Activated T-helper 1 cell treated with anti-CD3 and anti-CD28 coated beads, Interleukin-12 subunit alpha, Interleukin-12 subunit beta, Interleukin-2, Interleukin-4 antibody, amounts not matched to agents 30 ng/mL and 10 ng/mL and 1 ng/mL, durations not matched to agents 14 hours and 24 hours and 36 hours (primary cell): ENCODE measurements at regions of chr4 and their contacts with region 1.

Region 1: GRCh38 chr4:173288296-173288695 is 45.9 kb downstream of the HMGB2 start:
- DNase-seq: peak; percentile 62
- H3K4me3 Mint-ChIP-seq: no peak overlapping the region
- H3K27ac Mint-ChIP-seq: peak overlapping the region; percentile 67
- H3K4me1 Mint-ChIP-seq: peaks cover 17% of the 10 kb centered on the region
- H3K27me3 Mint-ChIP-seq: no peaks in the 10 kb centered on the region

Region 2: DNA sequence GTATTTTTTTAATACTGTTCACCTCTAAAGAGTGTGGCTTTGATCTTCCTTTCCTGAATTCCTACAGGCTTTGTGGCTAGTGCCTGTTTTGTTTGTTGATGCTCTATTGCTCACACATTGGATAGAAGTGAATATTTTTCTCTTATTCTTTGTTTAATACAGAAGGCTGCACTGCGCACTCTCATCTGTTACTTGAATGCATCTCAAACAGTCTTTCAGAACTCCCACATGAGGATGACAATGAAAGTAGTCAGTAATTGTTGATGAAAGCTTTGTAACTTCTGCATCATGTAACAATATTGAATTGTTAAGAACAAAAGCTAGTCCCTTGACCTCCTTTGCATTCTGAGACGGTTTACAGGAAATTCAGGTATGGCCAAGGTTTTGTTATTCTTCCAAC is 148.7 kb before region 1 on chr4:
- intact Hi-C with region 1: no loop called
- DNase-seq: no peak
- H3K4me3 Mint-ChIP-seq: no peak overlapping the region
- H3K27ac Mint-ChIP-seq: no peak overlapping the region
- H3K4me1 Mint-ChIP-seq: no peaks in the 10 kb centered on the region
- H3K27me3 Mint-ChIP-seq: peaks cover 8% of the 10 kb centered on the region

Region 3: GRCh38 chr4:173318648-173319211 is 30.4 kb after region 1 on chr4:
- intact Hi-C with region 1: loop called (anchors 1 kb)
- DNase-seq: no peak
- H3K4me3 Mint-ChIP-seq: no peak overlapping the region
- H3K27ac Mint-ChIP-seq: no peak overlapping the region
- H3K4me1 Mint-ChIP-seq: peaks cover 6% of the 10 kb centered on the region
- H3K27me3 Mint-ChIP-seq: no peaks in the 10 kb centered on the region

Region 4: GRCh38 chr4:173494013-173494970 is 206.0 kb after region 1 on chr4:
- intact Hi-C with region 1: loop called (anchors 1 kb)
- DNase-seq: peak; percentile 56
- H3K4me3 Mint-ChIP-seq: peak overlapping the region; percentile 87
- H3K27ac Mint-ChIP-seq: no peak overlapping the region
- H3K4me1 Mint-ChIP-seq: peaks cover 33% of the 10 kb centered on the region
- H3K27me3 Mint-ChIP-seq: peaks cover 35% of the 10 kb centered on the region

Region 5: GRCh38 chr4:174012135-174012885 is 724.0 kb after region 1 on chr4:
- intact Hi-C with region 1: no loop called
- DNase-seq: no peak
- H3K4me3 Mint-ChIP-seq: no peak overlapping the region
- H3K27ac Mint-ChIP-seq: no peak overlapping the region
- H3K4me1 Mint-ChIP-seq: no peaks in the 10 kb centered on the region
- H3K27me3 Mint-ChIP-seq: no peaks in the 10 kb centered on the region